PC-9 (cell line): ENCODE measurements at regions of chr6 and their contacts with region 1.

Region 1: DNA sequence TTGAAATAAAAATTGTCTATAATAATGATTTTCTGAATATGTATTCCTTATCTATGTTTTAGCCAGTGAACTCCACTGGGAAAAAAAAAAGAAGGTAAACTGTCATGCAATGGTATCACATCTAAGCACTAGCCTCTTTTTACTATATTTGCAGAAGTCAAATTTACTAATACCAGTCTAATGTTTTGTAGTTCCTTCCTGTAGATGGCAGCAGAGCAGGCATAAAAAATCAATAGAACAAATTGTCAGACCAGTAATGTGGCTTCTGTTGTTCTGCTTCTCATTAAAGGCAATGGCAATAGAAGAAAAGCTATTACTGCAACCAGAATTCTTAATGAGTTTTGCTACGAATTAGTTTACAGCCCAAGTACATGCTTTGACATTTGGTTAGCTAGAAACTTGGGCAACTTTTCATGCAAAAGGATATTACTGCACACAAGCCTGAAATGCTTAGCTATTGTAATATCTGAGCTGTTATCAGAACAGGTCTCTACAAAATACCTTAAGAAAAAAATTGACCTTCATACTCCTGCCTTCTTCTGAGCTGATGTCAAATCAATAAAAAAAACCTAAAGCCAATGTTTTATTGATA is 476.9 kb downstream of the KHDRBS2 start:
- DNase-seq: peak in 1 of 2 experiments; percentile 37
- H3K4me3 ChIP-seq: no peak overlapping the region
- H3K27ac ChIP-seq: no peak overlapping the region
- H3K4me1 ChIP-seq: no peaks in the 10 kb centered on the region
- H3K27me3 ChIP-seq: no peaks in the 10 kb centered on the region
- CTCF ChIP-seq: peak; percentile 68

Region 2: DNA sequence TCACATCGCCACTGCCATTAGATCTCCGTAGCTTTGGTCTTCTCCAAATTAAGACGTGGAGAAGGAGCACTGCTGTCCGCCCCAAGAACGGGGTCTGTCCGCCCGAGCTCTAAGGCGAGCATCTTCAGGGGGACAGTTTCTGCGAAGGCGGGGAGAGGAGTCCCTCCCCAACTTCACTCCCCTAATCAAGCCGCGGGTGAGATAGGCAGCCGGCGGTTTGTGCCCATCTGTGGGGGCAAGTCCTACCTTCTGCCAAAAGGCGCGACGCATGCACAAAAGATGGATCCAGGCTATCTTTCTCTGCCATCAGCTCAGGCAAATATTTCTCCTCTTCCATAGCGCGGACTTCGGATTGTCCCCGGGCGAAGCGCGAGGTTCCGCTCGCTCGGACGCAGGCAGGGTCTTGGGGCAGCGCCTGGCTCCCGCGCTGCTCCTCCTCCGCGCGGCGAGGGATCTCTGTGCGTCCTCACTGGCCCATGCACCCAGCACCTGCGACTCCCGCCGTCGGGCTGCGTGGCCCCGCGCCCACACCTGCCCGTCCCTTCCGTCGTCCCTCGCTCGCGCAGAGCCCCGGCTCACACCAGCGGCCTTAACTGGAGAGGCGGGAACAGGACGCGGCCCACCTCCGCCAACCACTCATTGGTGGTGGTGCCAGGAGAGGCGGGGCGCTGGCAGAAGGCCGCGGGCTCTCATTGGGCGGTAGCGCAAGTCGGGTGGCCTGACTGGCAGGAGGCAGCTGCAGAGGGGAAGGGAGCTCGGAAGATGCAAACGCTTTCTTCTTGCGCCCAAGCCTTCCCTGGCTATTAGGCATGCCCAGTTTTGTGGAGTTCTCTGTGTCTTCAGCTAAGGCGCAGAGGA is 476.7 kb after region 1 on chr6 and contains the start of gene KHDRBS2:
- CTCF ChIA-PET with region 1: no interaction called
- POLR2A ChIA-PET with region 1: no interaction called
- intact Hi-C with region 1: loop called (anchors 10 kb)
- DNase-seq: no peak
- H3K4me3 ChIP-seq: no peak within 1 kb of the TSS
- H3K27ac ChIP-seq: no peak within 1 kb of the TSS
- H3K4me1 ChIP-seq: no peaks in the 10 kb centered on the region
- H3K27me3 ChIP-seq: no peaks in the 10 kb centered on the region
- CTCF ChIP-seq: no peak
- total RNA-seq, gene KHDRBS2: not detected in 2 replicates

Region 3: DNA sequence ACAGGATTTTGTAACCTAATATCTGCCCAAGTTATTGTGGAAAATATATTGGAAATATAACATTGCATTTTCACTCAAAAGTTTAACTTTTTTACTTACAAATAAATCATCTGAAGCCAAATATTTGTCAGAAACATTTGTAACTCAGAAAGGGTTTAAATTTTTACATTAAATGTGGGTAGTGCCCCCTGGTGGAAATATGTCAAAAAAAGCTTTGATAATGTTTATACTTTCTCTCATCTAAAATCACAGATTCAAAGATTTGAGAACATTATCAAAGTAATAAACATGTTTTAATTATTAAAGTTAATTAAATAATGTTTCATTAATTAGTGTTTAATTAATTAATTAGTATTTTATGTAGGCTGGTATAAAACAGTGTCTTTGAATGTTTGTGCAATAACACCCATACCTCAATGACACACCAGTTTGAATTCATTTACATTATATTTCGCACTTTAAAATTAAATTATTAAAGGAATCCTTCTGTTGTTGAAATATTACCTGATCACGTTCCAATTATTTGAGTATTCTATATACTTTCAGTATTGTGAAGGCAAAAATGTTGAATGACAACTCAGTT is 1082.1 kb after region 1 on chr6:
- CTCF ChIA-PET with region 1: no interaction called
- POLR2A ChIA-PET with region 1: no interaction called
- intact Hi-C with region 1: no loop called
- DNase-seq: no peak
- H3K4me3 ChIP-seq: no peak overlapping the region
- H3K27ac ChIP-seq: no peak overlapping the region
- H3K4me1 ChIP-seq: no peaks in the 10 kb centered on the region
- H3K27me3 ChIP-seq: no peaks in the 10 kb centered on the region
- CTCF ChIP-seq: peak; percentile 64

Region 4: DNA sequence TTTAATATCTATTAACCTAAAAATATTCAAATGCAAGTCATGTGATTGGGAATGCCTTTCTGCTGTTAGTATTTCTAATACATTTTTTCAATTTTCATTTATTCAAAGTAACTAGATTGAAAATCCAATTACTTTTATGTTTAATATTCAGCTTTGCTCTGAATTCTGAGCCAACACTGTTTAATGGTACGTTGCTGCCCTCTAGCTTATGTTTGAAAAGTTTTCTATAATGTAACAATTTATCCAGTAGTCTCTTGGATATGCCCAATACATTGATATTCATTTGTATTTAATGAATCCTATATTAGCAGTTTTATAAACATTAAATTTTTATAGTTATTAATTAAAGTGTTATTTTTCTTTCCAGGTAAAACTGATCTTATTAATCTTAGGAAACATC is 1463.3 kb after region 1 on chr6:
- CTCF ChIA-PET with region 1: interaction called, 12 read pairs
- POLR2A ChIA-PET with region 1: no interaction called
- intact Hi-C with region 1: no loop called
- DNase-seq: no peak
- H3K4me3 ChIP-seq: no peak overlapping the region
- H3K27ac ChIP-seq: no peak overlapping the region
- H3K4me1 ChIP-seq: no peaks in the 10 kb centered on the region
- H3K27me3 ChIP-seq: 0 out of 2 replicates have a peak, but pooled peaks cover 5% of the 10 kb centered on the region
- CTCF ChIP-seq: peak; percentile 75